Endothelial cell of umbilical vein (primary cell): ENCODE measurements at regions of chr7 and their contacts with region 1.

Region 1: GRCh38 chr7:29309041-29309854 is 114.7 kb downstream of the CHN2 start:
- DNase-seq: peak; percentile 28
- H3K4me3 ChIP-seq: no peak overlapping the region
- H3K27ac ChIP-seq: no peak overlapping the region
- H3K4me1 ChIP-seq: peaks cover 19% of the 10 kb centered on the region
- H3K27me3 ChIP-seq: peaks cover 14% of the 10 kb centered on the region in 2 experiments
- CTCF ChIP-seq: peak; percentile 18 to 34
- POLR2A ChIP-seq: no peak

Region 2: DNA sequence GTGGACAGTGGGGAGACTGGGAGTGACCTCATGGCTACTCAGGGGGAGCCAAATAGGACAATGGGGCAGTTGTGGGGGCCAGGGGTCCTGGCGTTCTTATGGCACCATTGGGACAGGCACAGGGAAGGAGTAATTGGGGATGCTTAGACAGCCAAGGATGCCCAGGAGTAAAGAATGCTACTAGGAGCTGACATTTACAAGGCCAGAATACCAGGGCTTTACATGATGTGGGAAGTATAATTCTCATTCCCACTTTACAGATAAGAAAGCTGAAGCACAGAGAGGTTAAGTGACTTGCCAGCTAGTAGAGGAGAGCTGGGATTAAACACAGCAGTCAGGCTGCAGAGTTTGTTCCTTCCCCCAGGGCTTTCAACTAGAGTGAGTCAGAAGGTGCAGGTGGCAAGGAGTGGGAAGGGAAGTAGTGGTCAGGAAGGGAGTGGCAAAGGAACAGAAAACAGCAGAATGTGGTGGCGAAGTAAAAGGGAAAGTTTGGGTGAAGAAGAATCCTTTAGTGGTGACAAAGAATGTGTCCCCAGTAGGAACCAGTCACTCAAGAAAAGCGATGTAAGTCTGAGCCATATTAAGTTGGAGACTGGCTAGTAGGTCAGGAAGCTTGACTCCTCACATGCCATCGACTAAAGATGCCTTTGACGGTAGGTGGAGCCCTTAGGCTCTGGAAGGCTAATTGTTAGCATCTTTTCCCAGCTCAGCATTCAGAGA is 195.7 kb before region 1 on chr7:
- CTCF ChIA-PET with region 1: interaction called, 10 read pairs
- POLR2A ChIA-PET with region 1: no interaction called
- dilution Hi-C with region 1: no loop called
- intact Hi-C with region 1: loop called (anchors 5 kb)
- DNase-seq: peak; percentile 46
- H3K4me3 ChIP-seq: no peak overlapping the region
- H3K27ac ChIP-seq: no peak overlapping the region
- H3K4me1 ChIP-seq: peaks cover 16% of the 10 kb centered on the region
- H3K27me3 ChIP-seq: peaks cover 8 to 13% of the 10 kb centered on the region in 2 experiments
- CTCF ChIP-seq: peak; percentile 3 to 42
- POLR2A ChIP-seq: no peak

Region 3: GRCh38 chr7:29119538-29120199 is 189.6 kb before region 1 on chr7:
- CTCF ChIA-PET with region 1: no interaction called
- POLR2A ChIA-PET with region 1: no interaction called
- dilution Hi-C with region 1: no loop called
- intact Hi-C with region 1: loop called (anchors 5 kb)
- DNase-seq: no peak
- H3K4me3 ChIP-seq: no peak overlapping the region
- H3K27ac ChIP-seq: no peak overlapping the region
- H3K4me1 ChIP-seq: peaks cover 9% of the 10 kb centered on the region
- H3K27me3 ChIP-seq: no peaks in the 10 kb centered on the region
- CTCF ChIP-seq: no peak
- POLR2A ChIP-seq: no peak

Region 4: GRCh38 chr7:29194594-29195427 is 114.4 kb before region 1 on chr7 and contains the start of gene CHN2:
- CTCF ChIA-PET with region 1: interaction called, 67 read pairs
- POLR2A ChIA-PET with region 1: no interaction called
- dilution Hi-C with region 1: no loop called
- intact Hi-C with region 1: loop called (anchors 1 kb)
- DNase-seq: peak; percentile 42
- H3K4me3 ChIP-seq: peak within 1 kb of the TSS; percentile 72 to 88 (median 74)
- H3K27ac ChIP-seq: no peak within 1 kb of the TSS
- H3K4me1 ChIP-seq: peaks cover 8% of the 10 kb centered on the region
- H3K27me3 ChIP-seq: peaks cover 18 to 33% of the 10 kb centered on the region in 2 experiments
- CTCF ChIP-seq: no peak
- POLR2A ChIP-seq: no peak
- total RNA-seq, gene CHN2: 3.2 and 5.0 TPM in 2 replicates

Region 5: GRCh38 chr7:29239638-29240037 is 69.6 kb before region 1 on chr7:
- CTCF ChIA-PET with region 1: interaction called, 8 read pairs
- POLR2A ChIA-PET with region 1: no interaction called
- dilution Hi-C with region 1: no loop called
- intact Hi-C with region 1: loop called (anchors 1 kb)
- DNase-seq: no peak
- H3K4me3 ChIP-seq: no peak overlapping the region
- H3K27ac ChIP-seq: no peak overlapping the region
- H3K4me1 ChIP-seq: no peaks in the 10 kb centered on the region
- H3K27me3 ChIP-seq: peaks cover 0 to 2% of the 10 kb centered on the region in 2 experiments
- CTCF ChIP-seq: peak; percentile 42 to 57
- POLR2A ChIP-seq: no peak

Region 6: GRCh38 chr7:29265208-29265923 is 43.9 kb before region 1 on chr7:
- CTCF ChIA-PET with region 1: interaction called, 3 read pairs
- POLR2A ChIA-PET with region 1: interaction called, 3 read pairs
- dilution Hi-C with region 1: no loop called
- intact Hi-C with region 1: loop called (anchors 1 kb)
- DNase-seq: peak; percentile 94
- H3K4me3 ChIP-seq: no peak overlapping the region
- H3K27ac ChIP-seq: peak overlapping the region; percentile 89
- H3K4me1 ChIP-seq: peaks cover 16% of the 10 kb centered on the region
- H3K27me3 ChIP-seq: no peaks in the 10 kb centered on the region
- CTCF ChIP-seq: no peak
- POLR2A ChIP-seq: no peak

Region 7: GRCh38 chr7:29332042-29332811 is 23.0 kb after region 1 on chr7:
- CTCF ChIA-PET with region 1: no interaction called
- POLR2A ChIA-PET with region 1: no interaction called
- dilution Hi-C with region 1: no loop called
- intact Hi-C with region 1: no loop called
- DNase-seq: no peak
- H3K4me3 ChIP-seq: no peak overlapping the region
- H3K27ac ChIP-seq: no peak overlapping the region
- H3K4me1 ChIP-seq: no peaks in the 10 kb centered on the region
- H3K27me3 ChIP-seq: no peaks in the 10 kb centered on the region
- CTCF ChIP-seq: no peak
- POLR2A ChIP-seq: no peak